IMR-90 (cell line): ENCODE measurements at regions of chr3 and their contacts with region 1.

Region 1: DNA sequence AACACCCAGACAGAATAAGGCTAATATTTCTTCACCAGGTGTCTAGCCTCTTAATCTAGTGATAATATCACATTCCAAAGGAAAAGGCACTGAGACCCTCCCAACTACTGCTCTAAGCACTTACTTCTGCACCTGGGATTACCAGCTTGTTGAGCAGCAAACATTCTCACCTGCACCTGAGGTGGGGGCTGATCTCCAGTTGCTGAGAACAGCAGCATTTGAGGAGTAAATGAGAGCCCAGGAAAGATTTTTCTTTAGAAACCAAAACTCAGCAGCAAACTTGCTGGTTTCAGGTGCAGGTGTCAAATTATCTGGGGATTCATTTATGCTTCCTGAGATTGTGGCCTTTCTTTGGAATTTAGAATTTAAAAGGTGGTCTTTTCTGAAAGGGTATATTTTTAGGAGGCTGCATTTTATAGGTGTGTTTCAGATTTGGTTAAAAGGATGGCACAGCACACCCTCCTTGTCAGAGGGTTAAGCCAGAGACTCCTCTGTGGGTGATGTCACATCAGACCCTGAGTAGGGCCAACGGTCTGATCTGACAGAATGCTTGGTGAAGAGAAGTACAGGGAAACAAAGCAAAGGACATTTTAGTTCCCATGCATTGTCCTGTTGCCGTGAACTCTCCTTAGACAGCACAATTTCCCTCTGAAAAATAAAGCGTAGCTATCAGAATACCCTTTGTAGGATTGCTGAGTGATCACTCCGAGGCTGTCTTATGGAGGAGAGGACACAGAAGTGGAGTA is 411.0 kb upstream of the ATP11B start:
- DNase-seq: no peak
- ATAC-seq: no peak
- H3K4me3 ChIP-seq: no peak overlapping the region
- H3K27ac ChIP-seq: no peak overlapping the region
- H3K4me1 ChIP-seq: no peaks in the 10 kb centered on the region
- H3K27me3 ChIP-seq: no peaks in the 10 kb centered on the region
- CTCF ChIP-seq: no peak
- POLR2A ChIP-seq: no peak
- RAD21 ChIP-seq: no peak

Region 2: DNA sequence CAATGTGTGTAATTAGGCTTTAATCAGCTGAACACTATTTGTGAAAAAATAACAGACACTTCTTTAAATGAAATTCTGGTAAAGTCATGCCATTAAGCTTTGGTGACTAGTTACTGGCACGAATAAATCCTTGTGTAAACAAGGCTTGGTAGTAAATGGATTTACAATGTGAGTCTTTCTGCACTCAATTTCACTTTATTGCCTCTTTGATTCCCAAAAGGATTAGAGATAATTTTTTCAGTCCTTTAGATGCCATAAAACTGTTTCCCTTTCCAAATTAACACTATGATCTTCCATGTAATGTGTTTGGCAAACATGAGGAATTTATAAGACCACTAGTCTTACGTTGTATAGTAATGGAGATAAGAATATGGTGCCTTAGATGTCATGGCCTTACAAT is 1053.3 kb before region 1 on chr3:
- CTCF ChIA-PET with region 1: interaction called, 11 read pairs
- POLR2A ChIA-PET with region 1: no interaction called
- dilution Hi-C with region 1: no loop called
- in situ Hi-C with region 1: no loop called
- intact Hi-C with region 1: no loop called
- DNase-seq: no peak
- ATAC-seq: no peak
- H3K4me3 ChIP-seq: no peak overlapping the region
- H3K27ac ChIP-seq: no peak overlapping the region
- H3K4me1 ChIP-seq: no peaks in the 10 kb centered on the region
- H3K27me3 ChIP-seq: no peaks in the 10 kb centered on the region
- CTCF ChIP-seq: no peak
- POLR2A ChIP-seq: no peak
- RAD21 ChIP-seq: no peak

Region 3: GRCh38 chr3:182451871-182452270 is 69.6 kb after region 1 on chr3:
- CTCF ChIA-PET with region 1: no interaction called
- POLR2A ChIA-PET with region 1: no interaction called
- dilution Hi-C with region 1: no loop called
- in situ Hi-C with region 1: no loop called
- intact Hi-C with region 1: no loop called
- DNase-seq: no peak
- ATAC-seq: no peak
- H3K4me3 ChIP-seq: no peak overlapping the region
- H3K27ac ChIP-seq: no peak overlapping the region
- H3K4me1 ChIP-seq: no peaks in the 10 kb centered on the region
- H3K27me3 ChIP-seq: no peaks in the 10 kb centered on the region
- CTCF ChIP-seq: no peak
- POLR2A ChIP-seq: no peak
- RAD21 ChIP-seq: no peak